Activated CD8-positive, alpha-beta T cell treated with anti-CD3 and anti-CD28 coated beads for 36 hours (primary cell): ENCODE measurements at regions of chrX and their contacts with region 1.

Region 1: GRCh38 chrX:56802921-56803849 is 74.1 kb downstream of the NBDY start:
- DNase-seq: peak; percentile 64
- ATAC-seq: peak; percentile 31
- H3K4me3 Mint-ChIP-seq: no peak overlapping the region
- H3K27ac Mint-ChIP-seq: no peak overlapping the region
- H3K4me1 Mint-ChIP-seq: peaks cover 38% of the 10 kb centered on the region
- H3K27me3 Mint-ChIP-seq: no peaks in the 10 kb centered on the region
- CTCF ChIP-seq: no peak

Region 2: DNA sequence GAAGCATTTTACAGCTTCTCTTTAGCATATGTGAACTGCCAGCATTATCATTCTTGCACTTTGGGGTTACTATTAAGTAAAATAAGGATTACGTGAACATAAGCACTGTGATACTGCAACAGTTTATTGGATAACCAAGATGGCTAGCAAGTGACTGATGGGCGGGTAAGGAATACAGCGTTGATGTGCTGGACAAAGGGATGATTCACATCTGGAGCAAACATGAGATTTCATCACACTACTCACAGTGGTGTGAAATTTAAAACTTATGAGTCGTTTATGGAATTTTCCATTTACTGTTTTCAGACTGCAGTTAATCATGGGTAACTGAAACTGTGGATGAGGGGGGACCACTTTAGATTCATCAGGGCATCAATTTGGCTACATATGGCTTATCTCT is 58.2 kb before region 1 on chrX:
- CTCF ChIA-PET with region 1: no interaction called
- POLR2A ChIA-PET with region 1: no interaction called
- intact Hi-C with region 1: loop called (anchors 10 kb)
- DNase-seq: no peak
- ATAC-seq: peak; percentile 58
- H3K4me3 Mint-ChIP-seq: no peak overlapping the region
- H3K27ac Mint-ChIP-seq: peak overlapping the region; percentile 42
- H3K4me1 Mint-ChIP-seq: peaks cover 33% of the 10 kb centered on the region
- H3K27me3 Mint-ChIP-seq: no peaks in the 10 kb centered on the region
- CTCF ChIP-seq: no peak

Region 3: GRCh38 chrX:56978172-56978571 is 175.0 kb after region 1 on chrX:
- CTCF ChIA-PET with region 1: interaction called, 6 read pairs
- POLR2A ChIA-PET with region 1: no interaction called
- intact Hi-C with region 1: loop called (anchors 10 kb)
- DNase-seq: peak; percentile 44
- ATAC-seq: peak; percentile 76
- H3K4me3 Mint-ChIP-seq: no peak overlapping the region
- H3K27ac Mint-ChIP-seq: no peak overlapping the region
- H3K4me1 Mint-ChIP-seq: no peaks in the 10 kb centered on the region
- H3K27me3 Mint-ChIP-seq: no peaks in the 10 kb centered on the region
- CTCF ChIP-seq: peak; percentile 48